ENCODE measurements at regions of chr15 and their contacts with region 1.

Region 1: GRCh38 chr15:90233376-90234095 is at the start of gene CIB1:
- DNase-seq: peak; percentile 76
- H3K4me3 ChIP-seq: peak within 1 kb of the TSS; percentile 92
- H3K27me3 ChIP-seq: no peaks in the 10 kb centered on the region
- CTCF ChIP-seq: no peak; the same call in 1 of the 2 replicates
- polyA plus RNA-seq, gene CIB1: 60.5 and 102 TPM in 2 replicates

Region 2: DNA sequence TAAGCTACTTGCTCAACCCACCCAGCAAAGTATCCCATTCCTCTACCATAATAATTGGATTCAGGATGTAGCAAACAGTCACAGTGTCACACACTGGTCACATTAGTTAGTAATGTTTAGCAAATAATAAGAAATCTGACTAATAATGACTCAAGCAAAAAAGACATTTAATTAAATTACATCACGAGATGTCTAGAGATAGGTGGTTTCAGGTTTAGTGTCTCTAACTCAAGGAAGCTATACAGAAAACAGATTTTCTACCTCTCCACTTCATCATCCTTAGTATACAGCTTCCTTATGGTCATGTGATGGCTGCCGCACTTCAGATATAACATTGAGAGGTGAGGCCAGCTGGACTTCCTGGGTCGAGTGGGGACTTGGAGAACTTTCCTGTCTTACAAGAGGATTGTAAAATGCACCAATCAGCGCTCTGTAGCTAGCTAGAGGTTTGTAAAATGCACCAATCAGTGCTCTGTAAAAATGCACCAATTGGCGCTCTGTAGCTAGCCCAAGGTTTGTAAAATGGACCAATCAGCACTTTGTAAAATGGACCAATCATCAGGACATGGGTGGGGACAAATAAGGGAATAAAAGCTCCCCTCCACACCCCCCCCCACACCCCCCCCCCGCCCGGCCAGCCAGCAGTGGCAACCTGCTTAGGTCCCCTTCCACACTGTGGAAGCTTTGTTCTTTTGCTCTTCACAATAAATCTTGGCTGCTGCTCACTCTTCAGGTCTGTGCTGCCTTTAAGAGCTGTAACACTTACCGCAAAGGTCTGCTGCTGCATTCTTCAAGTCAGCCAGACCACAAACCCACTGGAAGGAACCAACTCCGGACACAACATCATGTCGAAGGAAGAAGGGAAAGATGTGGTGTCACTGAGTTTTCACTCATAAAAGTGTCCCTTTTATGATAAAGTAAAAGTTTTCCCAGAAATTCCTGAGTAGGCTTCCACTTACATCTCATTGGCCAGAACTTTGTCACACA is 295.9 kb before region 1 on chr15:
- CTCF ChIA-PET with region 1: no interaction called
- POLR2A ChIA-PET with region 1: interaction called, 14 read pairs
- DNase-seq: no peak
- H3K4me3 ChIP-seq: no peak overlapping the region
- H3K27me3 ChIP-seq: peaks cover 4% of the 10 kb centered on the region; the same call in 1 of the 2 replicates
- CTCF ChIP-seq: no peak

Measured in BJ (cell line).